RWPE1 (cell line): ENCODE measurements at regions of chr18 and their contacts with region 1.

Region 1: GRCh38 chr18:7021994-7022840 is 95.4 kb downstream of the LAMA1 start:
- DNase-seq: peak; percentile 78
- H3K27ac ChIP-seq: no peak overlapping the region
- CTCF ChIP-seq: peak; percentile 78

Region 2: GRCh38 chr18:6920099-6920899 is 101.9 kb before region 1 on chr18:
- CTCF ChIA-PET with region 1: interaction called, 31 read pairs
- POLR2A ChIA-PET with region 1: no interaction called
- DNase-seq: peak; percentile 44
- H3K27ac ChIP-seq: no peak overlapping the region
- CTCF ChIP-seq: peak; percentile 86

Region 3: DNA sequence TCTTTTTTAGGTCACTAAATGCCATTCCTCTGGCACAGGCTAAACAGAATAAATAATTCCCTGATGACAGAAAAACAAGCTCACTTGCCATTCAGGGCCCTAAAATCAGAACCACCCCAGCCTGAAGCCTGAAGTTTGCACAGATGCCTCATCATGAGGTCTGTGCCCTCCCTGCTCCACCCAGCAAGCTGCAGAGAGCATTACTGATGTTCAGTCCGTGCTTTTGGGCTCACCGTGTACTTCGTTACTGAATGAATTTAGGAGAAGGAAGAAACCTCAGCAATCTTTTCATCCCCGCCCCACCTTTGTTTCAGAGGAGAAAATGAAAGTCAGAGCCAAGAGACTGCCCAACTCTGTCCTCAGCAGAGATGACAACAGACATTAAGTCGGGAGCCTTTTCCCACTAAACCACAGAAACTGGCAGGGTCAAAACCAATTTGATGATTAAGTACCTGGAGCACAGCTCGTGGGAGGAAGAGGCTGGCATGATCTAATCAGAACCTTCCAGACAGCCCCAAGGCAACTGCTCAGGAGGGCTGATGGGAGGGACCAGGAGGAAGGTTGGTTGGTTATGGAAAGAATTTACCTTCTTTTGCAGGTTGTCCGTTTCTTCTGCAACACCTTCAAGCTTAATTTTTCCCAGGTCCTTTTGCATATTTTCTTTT is 27.3 kb before region 1 on chr18:
- CTCF ChIA-PET with region 1: interaction called, 10 read pairs
- POLR2A ChIA-PET with region 1: no interaction called
- DNase-seq: peak; percentile 69
- H3K27ac ChIP-seq: peak overlapping the region; percentile 87
- CTCF ChIP-seq: no peak

Region 4: DNA sequence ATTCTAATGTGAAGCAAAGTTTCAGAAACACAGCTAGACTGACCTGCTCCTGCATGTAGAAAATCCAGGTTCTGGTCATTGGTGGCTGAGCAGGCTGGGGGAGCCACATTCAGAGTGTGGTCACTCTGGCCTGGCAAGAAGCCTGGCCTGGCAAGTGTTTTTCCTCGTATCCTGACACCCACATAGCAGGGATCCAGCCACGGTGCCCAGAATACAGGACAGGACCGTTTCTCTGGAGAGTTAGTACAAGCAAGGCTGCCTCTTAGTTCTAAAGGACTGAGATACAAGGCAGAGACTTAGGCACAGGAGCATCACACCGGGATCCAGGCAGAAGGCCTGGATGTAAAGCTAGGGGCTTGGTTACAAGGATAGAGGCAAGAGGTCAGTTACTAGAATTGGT is 100.2 kb after region 1 on chr18:
- CTCF ChIA-PET with region 1: no interaction called
- POLR2A ChIA-PET with region 1: no interaction called
- DNase-seq: no peak
- H3K27ac ChIP-seq: no peak overlapping the region
- CTCF ChIP-seq: no peak